CD4-positive, alpha-beta memory T cell (primary cell): ENCODE measurements at regions of chr9 and their contacts with region 1.

Region 1: GRCh38 chr9:127586537-127586936 is 25.5 kb upstream of the STXBP1 start:
- DNase-seq: peak; percentile 53 to 56 (median 56)
- H3K4me3 ChIP-seq: no peak overlapping the region
- H3K4me3 Mint-ChIP-seq: no peak overlapping the region
- H3K27ac ChIP-seq: no peak overlapping the region
- H3K27ac Mint-ChIP-seq: peak overlapping the region in 1 of 7 donors; percentile 76
- H3K4me1 ChIP-seq: no peaks in the 10 kb centered on the region
- H3K4me1 Mint-ChIP-seq: peaks cover 0 to 3% (median 2%) of the 10 kb centered on the region in 4 donors
- H3K27me3 ChIP-seq: no peaks in the 10 kb centered on the region
- H3K27me3 Mint-ChIP-seq: peaks cover 3 to 5% of the 10 kb centered on the region in 2 donors

Region 2: GRCh38 chr9:126939821-126940221 is 646.7 kb before region 1 on chr9:
- CTCF ChIA-PET with region 1: no interaction called
- POLR2A ChIA-PET with region 1: no interaction called
- intact Hi-C with region 1: loop called (anchors 1 kb)
- DNase-seq: no peak
- H3K4me3 ChIP-seq: no peak overlapping the region
- H3K4me3 Mint-ChIP-seq: no peak overlapping the region
- H3K27ac ChIP-seq: no peak overlapping the region
- H3K27ac Mint-ChIP-seq: no peak overlapping the region
- H3K4me1 ChIP-seq: peaks cover 4% of the 10 kb centered on the region
- H3K4me1 Mint-ChIP-seq: peaks cover 4 to 11% (median 5%) of the 10 kb centered on the region in 4 donors
- H3K27me3 ChIP-seq: no peaks in the 10 kb centered on the region
- H3K27me3 Mint-ChIP-seq: no peaks in the 10 kb centered on the region

Region 3: GRCh38 chr9:127503947-127504782 is 82.4 kb before region 1 on chr9:
- CTCF ChIA-PET with region 1: interaction called, 73 read pairs
- POLR2A ChIA-PET with region 1: interaction called, 4 read pairs
- intact Hi-C with region 1: loop called (anchors 1 kb)
- DNase-seq: peak; percentile 74 to 76 (median 75)
- H3K4me3 ChIP-seq: no peak overlapping the region
- H3K4me3 Mint-ChIP-seq: no peak overlapping the region
- H3K27ac ChIP-seq: no peak overlapping the region
- H3K27ac Mint-ChIP-seq: peak overlapping the region in 4 of 7 donors; percentile 12 to 84 (median 70)
- H3K4me1 ChIP-seq: no peaks in the 10 kb centered on the region
- H3K4me1 Mint-ChIP-seq: peaks cover 0 to 5% (median 2%) of the 10 kb centered on the region in 4 donors
- H3K27me3 ChIP-seq: no peaks in the 10 kb centered on the region
- H3K27me3 Mint-ChIP-seq: no peaks in the 10 kb centered on the region

Region 4: GRCh38 chr9:127555768-127556397 is 30.7 kb before region 1 on chr9:
- CTCF ChIA-PET with region 1: interaction called, 10 read pairs
- POLR2A ChIA-PET with region 1: no interaction called
- intact Hi-C with region 1: no loop called
- DNase-seq: peak; percentile 34 to 74 (median 45)
- H3K4me3 ChIP-seq: peak overlapping the region in 1 of 2 donors; percentile 2
- H3K4me3 Mint-ChIP-seq: peak overlapping the region in 7 of 8 donors; percentile 59 to 83 (median 80)
- H3K27ac ChIP-seq: peak overlapping the region; percentile 0
- H3K27ac Mint-ChIP-seq: peak overlapping the region; percentile 74 to 89 (median 83)
- H3K4me1 ChIP-seq: peaks cover 55% of the 10 kb centered on the region
- H3K4me1 Mint-ChIP-seq: peaks cover 31 to 67% (median 52%) of the 10 kb centered on the region in 4 donors
- H3K27me3 ChIP-seq: no peaks in the 10 kb centered on the region
- H3K27me3 Mint-ChIP-seq: no peaks in the 10 kb centered on the region

Region 5: GRCh38 chr9:127729522-127730256 is 143.2 kb after region 1 on chr9:
- CTCF ChIA-PET with region 1: interaction called, 85 read pairs
- POLR2A ChIA-PET with region 1: interaction called, 6 read pairs
- intact Hi-C with region 1: no loop called
- DNase-seq: no peak
- H3K4me3 ChIP-seq: no peak overlapping the region
- H3K4me3 Mint-ChIP-seq: no peak overlapping the region
- H3K27ac ChIP-seq: no peak overlapping the region
- H3K27ac Mint-ChIP-seq: peak overlapping the region in 2 of 7 donors; percentile 34 to 60
- H3K4me1 ChIP-seq: peaks cover 10% of the 10 kb centered on the region
- H3K4me1 Mint-ChIP-seq: peaks cover 2 to 11% (median 9%) of the 10 kb centered on the region in 4 donors
- H3K27me3 ChIP-seq: no peaks in the 10 kb centered on the region
- H3K27me3 Mint-ChIP-seq: no peaks in the 10 kb centered on the region

Region 6: DNA sequence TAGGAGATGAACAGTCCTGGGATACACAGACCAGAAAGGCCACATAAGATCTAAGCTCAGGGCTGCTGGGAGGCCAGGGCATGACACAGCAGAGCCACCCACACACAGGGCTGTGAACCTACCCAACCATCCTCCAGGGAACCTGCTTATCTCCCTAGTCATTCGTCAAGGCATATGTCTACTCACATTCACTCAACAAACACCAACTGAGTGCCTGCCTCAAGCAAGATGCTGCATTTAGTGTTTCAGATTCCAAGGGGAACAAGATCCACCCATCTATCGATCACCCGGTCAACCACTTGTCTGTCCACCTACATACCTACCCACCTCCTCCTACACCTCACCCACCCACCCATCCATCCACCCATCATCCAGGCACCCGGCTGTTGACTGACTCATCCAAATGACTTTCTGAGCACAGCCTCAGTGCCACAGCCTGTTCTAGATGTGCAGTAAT is 349.3 kb after region 1 on chr9:
- CTCF ChIA-PET with region 1: no interaction called
- POLR2A ChIA-PET with region 1: no interaction called
- intact Hi-C with region 1: no loop called
- DNase-seq: peak in 1 of 5 donors; percentile 32
- H3K4me3 ChIP-seq: no peak overlapping the region
- H3K4me3 Mint-ChIP-seq: peak overlapping the region; percentile 82 to 98 (median 91)
- H3K27ac ChIP-seq: no peak overlapping the region
- H3K27ac Mint-ChIP-seq: peak overlapping the region in 6 of 7 donors; percentile 32 to 97 (median 79)
- H3K4me1 ChIP-seq: peaks cover 48% of the 10 kb centered on the region
- H3K4me1 Mint-ChIP-seq: peaks cover 30 to 62% (median 49%) of the 10 kb centered on the region in 4 donors
- H3K27me3 ChIP-seq: no peaks in the 10 kb centered on the region
- H3K27me3 Mint-ChIP-seq: no peaks in the 10 kb centered on the region